Endothelial cell of umbilical vein (primary cell): ENCODE measurements at regions of chr3 and their contacts with region 1.

Region 1: GRCh38 chr3:100068826-100069225 is 45.5 kb downstream of the FILIP1L start:
- DNase-seq: peak; percentile 85
- H3K4me3 ChIP-seq: no peak overlapping the region
- H3K27ac ChIP-seq: peak overlapping the region; percentile 54
- H3K4me1 ChIP-seq: peaks cover 16% of the 10 kb centered on the region
- H3K27me3 ChIP-seq: no peaks in the 10 kb centered on the region
- CTCF ChIP-seq: peak; percentile 71 to 75
- POLR2A ChIP-seq: no peak

Region 2: DNA sequence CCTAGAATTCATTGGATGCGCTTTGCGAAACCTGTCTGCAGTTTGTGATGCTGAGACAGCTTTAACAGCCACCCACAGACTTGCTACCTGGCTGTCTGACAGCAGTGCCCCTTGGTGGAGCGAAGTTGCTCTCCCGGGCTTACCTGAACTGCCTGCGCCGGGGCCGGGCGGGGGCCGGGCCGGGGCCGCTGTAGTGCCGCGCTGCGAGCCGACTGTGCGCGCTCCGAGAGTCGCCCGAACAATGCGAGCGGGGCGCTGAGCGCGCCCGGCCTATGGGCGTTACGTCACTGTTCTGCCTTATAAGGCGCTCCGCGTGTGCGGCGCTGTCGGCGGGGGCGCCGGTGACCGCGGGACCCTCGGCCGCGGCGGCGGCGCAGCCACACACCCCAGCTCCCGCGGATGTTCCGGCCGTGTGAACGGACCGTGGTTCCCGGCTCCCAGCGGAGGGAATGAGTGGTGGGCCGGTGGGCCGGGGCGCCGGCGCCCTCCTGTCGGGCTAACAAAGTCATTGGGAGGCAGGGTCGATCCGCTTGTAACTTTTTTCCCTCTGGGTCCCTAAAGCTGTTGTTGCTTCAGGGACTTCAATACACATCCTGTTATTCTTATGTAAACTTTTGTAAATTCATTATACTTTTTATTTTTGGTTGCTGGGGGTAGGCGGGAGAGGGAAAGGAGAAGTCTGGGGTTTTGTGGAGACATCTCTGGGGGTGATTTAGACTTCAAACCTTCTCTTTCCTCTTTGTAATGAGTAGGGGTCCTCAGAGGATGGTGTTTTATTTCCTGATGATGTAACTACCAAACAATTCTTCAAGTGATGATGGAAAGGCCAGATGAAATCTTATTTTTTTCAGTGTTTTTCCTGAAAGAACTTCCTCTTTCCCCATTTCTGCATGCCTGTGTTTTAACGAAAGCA is 192.6 kb before region 1 on chr3:
- CTCF ChIA-PET with region 1: interaction called, 3 read pairs
- POLR2A ChIA-PET with region 1: no interaction called
- dilution Hi-C with region 1: no loop called
- intact Hi-C with region 1: loop called (anchors 5 kb)
- DNase-seq: peak; percentile 89
- H3K4me3 ChIP-seq: peak overlapping the region; percentile 60 to 96 (median 91)
- H3K27ac ChIP-seq: peak overlapping the region; percentile 99
- H3K4me1 ChIP-seq: peaks cover 49% of the 10 kb centered on the region
- H3K27me3 ChIP-seq: no peaks in the 10 kb centered on the region
- CTCF ChIP-seq: peak in 1 of 2 donors; percentile 21
- POLR2A ChIP-seq: peak; percentile 96

Region 3: DNA sequence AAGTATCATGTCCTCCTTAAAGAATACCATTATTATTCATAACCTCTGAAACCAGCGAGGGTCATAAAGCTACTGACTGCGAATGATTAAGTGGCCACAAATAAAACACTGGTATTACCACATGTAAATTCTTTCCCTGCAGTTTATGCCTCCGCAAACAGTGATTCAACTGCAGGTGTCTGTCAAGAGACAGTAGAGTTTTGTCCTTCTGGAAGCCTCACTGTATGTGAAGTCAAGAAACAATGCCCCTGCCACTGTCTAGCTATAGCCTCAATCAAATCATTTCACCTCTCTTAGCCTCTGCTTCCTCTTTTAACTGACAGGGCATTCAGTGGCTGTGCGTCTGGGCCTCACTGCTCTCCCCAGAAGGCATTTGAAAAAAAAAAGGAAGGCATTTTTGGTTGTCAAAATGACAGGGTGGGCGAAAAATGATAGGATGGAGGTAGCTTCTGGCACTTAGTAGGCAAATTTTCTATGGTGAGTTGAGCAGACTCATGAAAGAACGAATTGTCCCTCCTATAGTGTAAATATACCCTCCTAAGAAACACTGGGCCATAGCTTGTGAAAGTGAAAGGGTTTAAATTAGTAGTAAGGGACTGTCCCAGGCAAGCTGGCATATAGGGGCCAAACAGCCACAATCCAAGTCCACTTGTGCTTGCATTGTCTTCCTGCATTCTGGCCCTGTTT is 21.2 kb before region 1 on chr3:
- CTCF ChIA-PET with region 1: interaction called, 14 read pairs
- POLR2A ChIA-PET with region 1: no interaction called
- dilution Hi-C with region 1: no loop called
- intact Hi-C with region 1: no loop called
- DNase-seq: peak; percentile 58
- H3K4me3 ChIP-seq: no peak overlapping the region
- H3K27ac ChIP-seq: peak overlapping the region; percentile 28
- H3K4me1 ChIP-seq: peaks cover 33% of the 10 kb centered on the region
- H3K27me3 ChIP-seq: no peaks in the 10 kb centered on the region
- CTCF ChIP-seq: no peak
- POLR2A ChIP-seq: no peak

Region 4: GRCh38 chr3:100254168-100254777 is 185.4 kb after region 1 on chr3:
- CTCF ChIA-PET with region 1: interaction called, 197 read pairs
- POLR2A ChIA-PET with region 1: no interaction called
- dilution Hi-C with region 1: no loop called
- intact Hi-C with region 1: loop called (anchors 1 kb)
- DNase-seq: peak; percentile 75
- H3K4me3 ChIP-seq: no peak overlapping the region
- H3K27ac ChIP-seq: no peak overlapping the region
- H3K4me1 ChIP-seq: no peaks in the 10 kb centered on the region
- H3K27me3 ChIP-seq: no peaks in the 10 kb centered on the region
- CTCF ChIP-seq: peak; percentile 76 to 81
- POLR2A ChIP-seq: no peak

Region 5: DNA sequence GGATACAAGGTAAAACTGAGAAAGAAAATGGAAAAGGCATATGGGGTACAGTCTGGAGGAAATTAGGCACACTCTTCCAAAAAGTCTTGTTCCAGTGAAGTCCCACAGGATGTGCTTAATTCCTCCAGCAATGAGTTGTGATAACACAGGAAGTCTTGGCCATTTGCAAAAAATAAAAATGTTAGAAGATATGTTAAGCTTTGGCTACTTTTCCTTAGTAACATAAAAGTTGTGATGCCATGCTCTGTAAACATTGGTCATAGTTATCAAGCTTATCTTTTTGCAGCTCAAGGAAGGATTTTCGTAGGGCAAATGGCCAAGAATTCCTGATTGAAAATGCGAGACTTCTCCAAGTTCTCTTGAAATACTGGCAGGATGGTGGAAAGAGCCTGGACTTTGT is 358.9 kb after region 1 on chr3:
- CTCF ChIA-PET with region 1: no interaction called
- POLR2A ChIA-PET with region 1: no interaction called
- dilution Hi-C with region 1: no loop called
- intact Hi-C with region 1: no loop called
- DNase-seq: peak; percentile 44
- H3K4me3 ChIP-seq: no peak overlapping the region
- H3K27ac ChIP-seq: no peak overlapping the region
- H3K4me1 ChIP-seq: no peaks in the 10 kb centered on the region
- H3K27me3 ChIP-seq: peaks cover 0 to 6% of the 10 kb centered on the region in 2 experiments
- CTCF ChIP-seq: no peak
- POLR2A ChIP-seq: no peak

Region 6: DNA sequence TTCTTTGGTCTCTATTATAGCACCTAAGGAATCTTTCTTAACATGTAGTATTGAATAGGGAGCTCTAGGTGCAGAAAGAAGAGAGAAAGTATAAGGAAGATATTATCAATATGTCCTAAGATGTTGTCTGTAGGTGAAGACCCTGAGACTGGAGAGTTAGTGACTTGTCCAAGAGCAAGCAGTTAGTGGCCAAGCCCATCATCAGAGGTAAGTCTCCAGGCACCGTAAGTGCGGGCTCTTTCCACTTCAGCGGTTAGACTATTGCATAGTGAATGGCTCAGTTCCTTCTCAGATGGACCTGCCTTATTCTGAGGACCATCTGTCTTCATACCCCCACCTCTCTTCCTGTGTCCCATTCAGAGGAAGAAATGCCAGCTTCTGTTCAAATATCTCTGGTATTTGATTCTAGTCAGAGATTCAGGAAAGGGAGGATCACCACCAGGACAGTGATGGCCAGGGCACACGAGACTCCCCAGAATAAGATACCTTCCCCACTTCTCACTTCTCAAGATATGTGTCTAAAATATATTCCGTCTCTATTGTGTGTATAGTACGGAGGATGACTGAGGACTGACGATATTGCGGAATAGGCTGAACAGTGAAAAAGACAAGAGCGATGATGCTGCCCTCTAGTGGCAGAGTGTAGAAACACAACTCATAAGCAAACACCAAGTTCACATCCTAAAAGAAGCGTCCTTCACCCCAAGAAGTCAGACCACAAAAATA is 521.5 kb after region 1 on chr3:
- CTCF ChIA-PET with region 1: interaction called, 3 read pairs
- POLR2A ChIA-PET with region 1: no interaction called
- dilution Hi-C with region 1: no loop called
- intact Hi-C with region 1: loop called (anchors 10 kb)
- DNase-seq: peak; percentile 80
- H3K4me3 ChIP-seq: peak overlapping the region in 1 of 3 experiments; percentile 44
- H3K27ac ChIP-seq: no peak overlapping the region
- H3K4me1 ChIP-seq: peaks cover 3% of the 10 kb centered on the region
- H3K27me3 ChIP-seq: peaks cover 0 to 2% of the 10 kb centered on the region in 2 experiments
- CTCF ChIP-seq: peak; percentile 68 to 76
- POLR2A ChIP-seq: no peak